Transverse colon (tissue), 4 donors: ENCODE measurements at regions of chr20 and their contacts with region 1.

Region 1: GRCh38 chr20:44187051-44187762 is at the start of gene JPH2:
- DNase-seq: peak; percentile 56
- H3K4me3 ChIP-seq: peak within 1 kb of the TSS; percentile 43 to 55 (median 50)
- H3K27ac ChIP-seq: peak within 1 kb of the TSS; percentile 82 to 91 (median 86)
- H3K4me1 ChIP-seq: peaks cover 0 to 30% (median 3%) of the 10 kb centered on the region in 4 donors
- H3K27me3 ChIP-seq: no peaks in the 10 kb centered on the region
- CTCF ChIP-seq: no peak
- EP300 ChIP-seq: peak; percentile 84
- POLR2A ChIP-seq: no peak
- total RNA-seq, gene JPH2: 9.8 to 216 (median 18.3) TPM

Region 2: GRCh38 chr20:44115762-44116644 is 71.2 kb before region 1 on chr20:
- in situ Hi-C with region 1: loop called in 3 of 4 experiments (anchors 5 kb)
- intact Hi-C with region 1: loop called (anchors 2 kb)
- DNase-seq: no peak
- H3K4me3 ChIP-seq: no peak overlapping the region
- H3K27ac ChIP-seq: peak overlapping the region; percentile 9 to 67 (median 27)
- H3K4me1 ChIP-seq: peaks cover 0 to 8% (median 5%) of the 10 kb centered on the region in 4 donors
- H3K27me3 ChIP-seq: peaks cover 14% of the 10 kb centered on the region
- CTCF ChIP-seq: no peak
- EP300 ChIP-seq: no peak
- POLR2A ChIP-seq: no peak

Region 3: DNA sequence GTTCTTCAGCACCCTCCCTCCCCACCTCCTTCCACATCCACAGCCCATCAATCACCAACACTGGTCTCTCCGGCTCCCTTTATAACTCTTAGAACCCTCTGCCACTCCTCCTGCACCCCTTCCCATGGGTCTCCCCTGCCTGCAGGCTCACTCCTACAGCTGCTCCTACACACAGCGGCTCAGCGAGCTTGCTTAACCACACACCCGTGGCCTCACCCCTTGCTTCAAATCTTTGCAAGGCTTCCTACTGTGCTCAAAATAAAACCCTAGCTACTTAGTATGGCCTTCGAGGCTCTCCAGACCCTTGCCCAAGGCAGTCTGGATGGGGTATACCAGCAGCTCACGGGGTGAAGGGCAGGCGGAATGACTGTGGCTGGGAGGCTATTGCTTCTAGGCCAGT is 64.0 kb before region 1 on chr20:
- in situ Hi-C with region 1: loop called in 2 of 4 experiments (anchors 5 kb)
- intact Hi-C with region 1: no loop called
- DNase-seq: no peak
- H3K4me3 ChIP-seq: no peak overlapping the region
- H3K27ac ChIP-seq: peak overlapping the region; percentile 3 to 68 (median 41)
- H3K4me1 ChIP-seq: peaks cover 0 to 5% (median 2%) of the 10 kb centered on the region in 4 donors
- H3K27me3 ChIP-seq: peaks cover 18% of the 10 kb centered on the region
- CTCF ChIP-seq: no peak
- EP300 ChIP-seq: no peak
- POLR2A ChIP-seq: no peak

Region 4: GRCh38 chr20:44137210-44137801 is 49.9 kb before region 1 on chr20:
- in situ Hi-C with region 1: no loop called
- intact Hi-C with region 1: loop called (anchors 5 kb)
- DNase-seq: peak; percentile 41
- H3K4me3 ChIP-seq: no peak overlapping the region
- H3K27ac ChIP-seq: peak overlapping the region; percentile 81 to 89 (median 82)
- H3K4me1 ChIP-seq: peaks cover 0 to 3% (median 0%) of the 10 kb centered on the region in 4 donors
- H3K27me3 ChIP-seq: peaks cover 9% of the 10 kb centered on the region
- CTCF ChIP-seq: no peak
- EP300 ChIP-seq: no peak
- POLR2A ChIP-seq: no peak